CD14-positive monocyte (primary cell): ENCODE measurements at regions of chr4 and their contacts with region 1.

Region 1: DNA sequence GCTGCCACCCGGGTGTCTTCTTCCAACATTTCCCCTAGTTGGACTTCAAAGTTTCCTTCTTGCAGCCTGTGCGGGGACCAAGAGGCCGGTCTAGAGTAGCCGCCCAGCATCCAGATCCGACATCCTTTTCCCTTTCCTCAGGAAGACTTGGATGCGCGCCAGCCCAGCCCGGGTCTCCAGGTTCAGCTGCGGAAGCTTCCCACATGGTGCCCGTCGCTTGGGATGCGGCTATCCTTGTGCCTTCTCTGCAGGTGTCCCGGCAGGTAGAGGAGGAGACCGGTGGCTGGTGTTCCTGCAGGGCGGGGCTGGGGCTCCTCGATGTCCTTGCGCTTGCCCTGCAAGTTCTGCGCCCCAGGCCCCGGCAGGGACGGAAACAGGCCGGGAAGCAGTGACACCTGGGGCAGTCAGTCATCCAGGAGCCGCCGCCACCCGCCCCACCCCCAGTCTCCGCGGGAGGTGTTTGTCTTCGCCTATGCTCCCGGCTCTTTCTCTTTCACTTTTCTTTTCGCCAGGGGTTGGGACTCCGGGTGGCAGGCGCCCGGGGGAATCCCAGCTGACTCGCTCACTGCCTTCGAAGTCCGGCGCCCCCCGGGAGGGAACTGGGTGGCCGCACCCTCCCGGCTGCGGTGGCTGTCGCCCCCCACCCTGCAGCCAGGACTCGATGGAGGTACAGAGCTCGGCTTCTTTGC is at the start of gene IL15:
- DNase-seq: peak; percentile 51 to 81 (median 56)
- H3K4me3 ChIP-seq: peak within 1 kb of the TSS; percentile 53 to 98 (median 93)
- H3K4me3 Mint-ChIP-seq: peak within 1 kb of the TSS; percentile 98 to 99
- H3K27ac ChIP-seq: peak within 1 kb of the TSS; percentile 65 to 91
- H3K27ac Mint-ChIP-seq: peak within 1 kb of the TSS; percentile 86 to 96 (median 94)
- H3K4me1 ChIP-seq: peaks cover 32 to 47% of the 10 kb centered on the region in 2 donors
- H3K4me1 Mint-ChIP-seq: peaks cover 43% of the 10 kb centered on the region
- H3K27me3 ChIP-seq: peaks cover 0 to 5% of the 10 kb centered on the region in 2 donors
- H3K27me3 Mint-ChIP-seq: peaks cover 0 to 19% (median 13%) of the 10 kb centered on the region in 3 donors
- CTCF ChIP-seq: no peak
- polyA plus RNA-seq, gene IL15: 22.1 to 34.3 (median 25.7) TPM

Region 2: GRCh38 chr4:141220655-141221605 is 415.3 kb before region 1 on chr4 and contains the start of gene ZNF330:
- intact Hi-C with region 1: loop called in 1 of 2 experiments (anchors 5 kb)
- DNase-seq: peak; percentile 81 to 89 (median 85)
- H3K4me3 ChIP-seq: peak within 1 kb of the TSS; percentile 78 to 92 (median 87)
- H3K4me3 Mint-ChIP-seq: peak within 1 kb of the TSS; percentile 85 to 91
- H3K27ac ChIP-seq: peak within 1 kb of the TSS; percentile 94 to 99
- H3K27ac Mint-ChIP-seq: peak within 1 kb of the TSS; percentile 91 to 98 (median 96)
- H3K4me1 ChIP-seq: peaks cover 12 to 16% of the 10 kb centered on the region in 2 donors
- H3K4me1 Mint-ChIP-seq: peaks cover 29% of the 10 kb centered on the region
- H3K27me3 ChIP-seq: no peaks in the 10 kb centered on the region
- H3K27me3 Mint-ChIP-seq: peaks cover 0 to 3% (median 0%) of the 10 kb centered on the region in 3 donors
- CTCF ChIP-seq: no peak
- polyA plus RNA-seq, gene ZNF330: 21.6 to 38.9 (median 27.7) TPM

Region 3: DNA sequence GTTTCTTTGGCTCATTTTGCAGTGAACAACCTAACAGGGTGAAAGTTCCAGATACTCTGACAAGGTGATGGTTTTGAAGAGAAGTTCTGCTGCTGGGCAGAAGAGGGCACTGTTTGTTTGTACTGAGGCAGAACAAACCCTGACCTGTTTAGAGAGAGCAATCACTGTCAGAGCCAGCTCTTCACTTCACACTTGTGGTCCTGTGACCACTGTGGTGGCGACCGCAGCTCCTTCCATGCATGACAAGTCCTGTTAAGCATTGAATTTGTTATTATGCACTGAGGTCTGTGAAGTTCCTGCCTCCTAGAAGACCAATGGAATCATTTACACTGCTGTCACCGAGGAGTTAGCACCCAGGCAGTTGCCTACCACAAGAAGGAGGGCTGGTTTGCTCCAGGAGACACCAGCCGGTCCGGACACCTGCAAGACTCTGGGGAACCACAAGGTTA is 329.0 kb before region 1 on chr4:
- intact Hi-C with region 1: loop called in 1 of 2 experiments (anchors 10 kb)
- DNase-seq: peak; percentile 67 to 76 (median 73)
- H3K4me3 ChIP-seq: no peak overlapping the region
- H3K4me3 Mint-ChIP-seq: peak overlapping the region in 1 of 2 donors; percentile 68
- H3K27ac ChIP-seq: peak overlapping the region; percentile 28 to 49
- H3K27ac Mint-ChIP-seq: peak overlapping the region in 6 of 7 donors; percentile 51 to 91 (median 76)
- H3K4me1 ChIP-seq: peaks cover 23 to 44% of the 10 kb centered on the region in 2 donors
- H3K4me1 Mint-ChIP-seq: peaks cover 50% of the 10 kb centered on the region
- H3K27me3 ChIP-seq: no peaks in the 10 kb centered on the region
- H3K27me3 Mint-ChIP-seq: no peaks in the 10 kb centered on the region
- CTCF ChIP-seq: peak; percentile 88

Region 4: GRCh38 chr4:141346144-141346543 is 290.1 kb before region 1 on chr4:
- intact Hi-C with region 1: loop called (anchors 10 kb)
- DNase-seq: peak in 2 of 3 donors; percentile 53 to 62
- H3K4me3 ChIP-seq: no peak overlapping the region
- H3K4me3 Mint-ChIP-seq: no peak overlapping the region
- H3K27ac ChIP-seq: no peak overlapping the region
- H3K27ac Mint-ChIP-seq: peak overlapping the region in 1 of 7 donors; percentile 57
- H3K4me1 ChIP-seq: peaks cover 44 to 59% of the 10 kb centered on the region in 2 donors
- H3K4me1 Mint-ChIP-seq: peaks cover 62% of the 10 kb centered on the region
- H3K27me3 ChIP-seq: no peaks in the 10 kb centered on the region
- H3K27me3 Mint-ChIP-seq: peaks cover 0 to 2% (median 0%) of the 10 kb centered on the region in 3 donors
- CTCF ChIP-seq: peak; percentile 70

Region 5: GRCh38 chr4:141388483-141388882 is 247.7 kb before region 1 on chr4:
- intact Hi-C with region 1: no loop called
- DNase-seq: no peak
- H3K4me3 ChIP-seq: no peak overlapping the region
- H3K4me3 Mint-ChIP-seq: no peak overlapping the region
- H3K27ac ChIP-seq: no peak overlapping the region
- H3K27ac Mint-ChIP-seq: peak overlapping the region in 1 of 7 donors; percentile 58
- H3K4me1 ChIP-seq: no peaks in the 10 kb centered on the region
- H3K4me1 Mint-ChIP-seq: no peaks in the 10 kb centered on the region
- H3K27me3 ChIP-seq: no peaks in the 10 kb centered on the region
- H3K27me3 Mint-ChIP-seq: peaks cover 0 to 2% (median 1%) of the 10 kb centered on the region in 3 donors
- CTCF ChIP-seq: no peak

Region 6: GRCh38 chr4:141432000-141432712 is 204.1 kb before region 1 on chr4:
- intact Hi-C with region 1: no loop called
- DNase-seq: no peak
- H3K4me3 ChIP-seq: no peak overlapping the region
- H3K4me3 Mint-ChIP-seq: no peak overlapping the region
- H3K27ac ChIP-seq: no peak overlapping the region
- H3K27ac Mint-ChIP-seq: peak overlapping the region in 1 of 7 donors; percentile 43
- H3K4me1 ChIP-seq: no peaks in the 10 kb centered on the region
- H3K4me1 Mint-ChIP-seq: no peaks in the 10 kb centered on the region
- H3K27me3 ChIP-seq: no peaks in the 10 kb centered on the region
- H3K27me3 Mint-ChIP-seq: no peaks in the 10 kb centered on the region
- CTCF ChIP-seq: no peak

Region 7: GRCh38 chr4:141686146-141686775 is 50.0 kb after region 1 on chr4:
- intact Hi-C with region 1: loop called in 1 of 2 experiments (anchors 10 kb)
- DNase-seq: peak; percentile 44 to 73 (median 63)
- H3K4me3 ChIP-seq: no peak overlapping the region
- H3K4me3 Mint-ChIP-seq: no peak overlapping the region
- H3K27ac ChIP-seq: no peak overlapping the region
- H3K27ac Mint-ChIP-seq: no peak overlapping the region
- H3K4me1 ChIP-seq: no peaks in the 10 kb centered on the region
- H3K4me1 Mint-ChIP-seq: peaks cover 7% of the 10 kb centered on the region
- H3K27me3 ChIP-seq: no peaks in the 10 kb centered on the region
- H3K27me3 Mint-ChIP-seq: no peaks in the 10 kb centered on the region
- CTCF ChIP-seq: no peak

Region 8: DNA sequence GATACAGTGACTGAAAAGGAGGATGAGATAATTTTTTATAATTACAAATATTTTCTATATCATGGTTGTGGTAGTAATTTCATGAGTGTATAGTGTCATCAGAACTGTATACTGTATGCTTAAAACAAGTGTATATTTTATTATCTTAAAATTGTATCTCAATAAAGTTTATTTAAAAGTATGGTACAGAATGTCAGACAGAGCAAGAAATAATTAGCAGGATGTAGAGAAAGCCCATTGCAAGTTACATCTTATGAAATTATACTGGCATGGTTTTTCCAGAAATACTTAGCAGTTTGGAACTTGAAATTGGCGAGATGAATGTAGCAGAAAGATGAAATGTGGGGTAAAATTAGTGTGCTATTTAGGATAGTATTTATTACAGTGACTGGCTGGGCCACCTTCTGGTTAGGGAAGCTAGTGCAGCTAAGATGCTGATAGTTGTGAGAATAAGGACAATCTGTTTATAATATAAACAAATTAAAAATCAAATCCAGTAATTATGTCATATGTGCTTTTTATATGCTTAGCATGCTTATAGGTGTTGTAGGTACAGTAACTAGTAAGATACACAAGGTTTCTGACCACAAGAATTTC is 74.9 kb after region 1 on chr4:
- intact Hi-C with region 1: no loop called
- DNase-seq: peak in 2 of 3 donors; percentile 10 to 38
- H3K4me3 ChIP-seq: no peak overlapping the region
- H3K4me3 Mint-ChIP-seq: no peak overlapping the region
- H3K27ac ChIP-seq: no peak overlapping the region
- H3K27ac Mint-ChIP-seq: peak overlapping the region in 2 of 7 donors; percentile 6
- H3K4me1 ChIP-seq: peaks cover 9 to 19% of the 10 kb centered on the region in 2 donors
- H3K4me1 Mint-ChIP-seq: peaks cover 33% of the 10 kb centered on the region
- H3K27me3 ChIP-seq: no peaks in the 10 kb centered on the region
- H3K27me3 Mint-ChIP-seq: peaks cover 2 to 3% (median 2%) of the 10 kb centered on the region in 3 donors
- CTCF ChIP-seq: peak; percentile 80

Region 9: GRCh38 chr4:142016031-142016430 is 379.8 kb after region 1 on chr4:
- intact Hi-C with region 1: no loop called
- DNase-seq: no peak
- H3K4me3 ChIP-seq: no peak overlapping the region
- H3K4me3 Mint-ChIP-seq: no peak overlapping the region
- H3K27ac ChIP-seq: no peak overlapping the region
- H3K27ac Mint-ChIP-seq: no peak overlapping the region
- H3K4me1 ChIP-seq: no peaks in the 10 kb centered on the region
- H3K4me1 Mint-ChIP-seq: no peaks in the 10 kb centered on the region
- H3K27me3 ChIP-seq: no peaks in the 10 kb centered on the region
- H3K27me3 Mint-ChIP-seq: no peaks in the 10 kb centered on the region
- CTCF ChIP-seq: no peak